ENCODE measurements at regions of chr13 and their contacts with region 1.

Region 1: DNA sequence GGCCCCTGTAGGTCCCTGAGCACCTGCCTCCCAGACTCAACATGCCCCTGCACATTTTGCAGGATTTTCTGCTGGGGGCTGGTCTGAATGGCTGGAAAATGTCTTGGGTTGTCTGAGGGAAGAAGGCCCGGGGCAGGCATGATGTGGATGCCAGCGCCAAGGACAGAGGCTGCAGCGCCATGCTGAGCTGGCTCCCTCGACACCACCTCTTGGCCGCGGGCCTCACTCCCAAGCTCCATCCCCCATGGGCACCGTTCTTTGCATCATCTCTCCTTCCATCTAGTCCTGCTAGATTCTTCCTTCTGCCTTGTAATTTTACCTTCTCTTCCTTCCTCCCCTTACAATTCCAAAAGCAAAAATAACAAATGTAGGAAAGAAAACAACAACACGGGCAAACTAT is 70.6 kb downstream of the ZIC5 start:
- DNase-seq: no peak
- ATAC-seq: no peak
- H3K4me3 ChIP-seq: no peak overlapping the region
- H3K27ac ChIP-seq: no peak overlapping the region
- H3K4me1 ChIP-seq: no peaks in the 10 kb centered on the region
- H3K27me3 ChIP-seq: peaks cover 8 to 29% of the 10 kb centered on the region in 2 experiments; a peak in 4 of 5 replicates
- CTCF ChIP-seq: no peak
- EP300 ChIP-seq: no peak
- POLR2A ChIP-seq: no peak
- RAD21 ChIP-seq: no peak

Region 2: GRCh38 chr13:100542826-100543156 is 641.8 kb after region 1 on chr13:
- CTCF ChIA-PET with region 1: no interaction called
- POLR2A ChIA-PET with region 1: no interaction called
- in situ Hi-C with region 1: no loop called
- intact Hi-C with region 1: loop called (anchors 1 kb)
- DNase-seq: peak in 3 of 4 experiments; percentile 10 to 15 (median 14)
- ATAC-seq: peak; percentile 61
- H3K4me3 ChIP-seq: no peak overlapping the region
- H3K27ac ChIP-seq: no peak overlapping the region
- H3K4me1 ChIP-seq: peaks cover 0 to 3% of the 10 kb centered on the region in 2 experiments; a peak in 1 of 5 replicates
- H3K27me3 ChIP-seq: peaks cover 0 to 5% of the 10 kb centered on the region in 2 experiments; a peak in 1 of 5 replicates
- CTCF ChIP-seq: peak; percentile 20 to 51 (median 21); a peak in 3 of 6 replicates
- EP300 ChIP-seq: no peak
- POLR2A ChIP-seq: no peak
- RAD21 ChIP-seq: peak in 1 of 2 experiments; percentile 39; a peak in 2 of 4 replicates